Colonic mucosa (tissue), 4 donors: ENCODE measurements at regions of chr7 and their contacts with region 1.

Region 1: GRCh38 chr7:41940760-41941343 is 238.0 kb upstream of the INHBA start:
- DNase-seq: peak; percentile 69
- H3K4me3 ChIP-seq: no peak overlapping the region
- H3K27ac ChIP-seq: no peak overlapping the region
- H3K4me1 ChIP-seq: peaks cover 7% of the 10 kb centered on the region
- H3K27me3 ChIP-seq: no peaks in the 10 kb centered on the region
- CTCF ChIP-seq: peak; percentile 95

Region 2: DNA sequence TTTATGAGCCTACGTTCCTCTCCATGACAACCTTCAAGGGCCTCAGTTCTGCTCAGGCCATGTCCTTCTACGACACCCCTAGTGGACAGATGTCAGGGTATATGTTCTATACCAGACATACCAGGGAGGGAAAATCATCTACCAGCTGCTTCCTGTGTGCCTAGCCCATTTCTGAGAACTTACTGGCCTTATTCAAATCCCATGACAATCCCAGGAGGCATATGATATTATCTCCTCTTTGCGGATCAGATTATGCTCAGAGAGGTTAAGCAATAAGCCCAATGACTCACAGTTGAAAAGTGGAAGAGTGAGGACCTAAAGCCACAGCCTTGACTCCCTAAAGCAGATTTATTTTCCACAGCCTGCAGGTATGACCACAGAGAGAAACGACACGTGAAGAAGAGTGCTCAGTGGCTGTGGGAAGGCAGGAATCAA is 156.9 kb after region 1 on chr7:
- intact Hi-C with region 1: no loop called
- DNase-seq: no peak
- H3K4me3 ChIP-seq: no peak overlapping the region
- H3K27ac ChIP-seq: no peak overlapping the region
- H3K4me1 ChIP-seq: peaks cover 3% of the 10 kb centered on the region
- H3K27me3 ChIP-seq: no peaks in the 10 kb centered on the region
- CTCF ChIP-seq: no peak

Region 3: GRCh38 chr7:42690794-42691639 is 750.2 kb after region 1 on chr7:
- intact Hi-C with region 1: loop called (anchors 10 kb)
- DNase-seq: peak; percentile 27
- H3K4me3 ChIP-seq: no peak overlapping the region
- H3K27ac ChIP-seq: no peak overlapping the region
- H3K4me1 ChIP-seq: no peaks in the 10 kb centered on the region
- H3K27me3 ChIP-seq: no peaks in the 10 kb centered on the region
- CTCF ChIP-seq: no peak

Region 4: DNA sequence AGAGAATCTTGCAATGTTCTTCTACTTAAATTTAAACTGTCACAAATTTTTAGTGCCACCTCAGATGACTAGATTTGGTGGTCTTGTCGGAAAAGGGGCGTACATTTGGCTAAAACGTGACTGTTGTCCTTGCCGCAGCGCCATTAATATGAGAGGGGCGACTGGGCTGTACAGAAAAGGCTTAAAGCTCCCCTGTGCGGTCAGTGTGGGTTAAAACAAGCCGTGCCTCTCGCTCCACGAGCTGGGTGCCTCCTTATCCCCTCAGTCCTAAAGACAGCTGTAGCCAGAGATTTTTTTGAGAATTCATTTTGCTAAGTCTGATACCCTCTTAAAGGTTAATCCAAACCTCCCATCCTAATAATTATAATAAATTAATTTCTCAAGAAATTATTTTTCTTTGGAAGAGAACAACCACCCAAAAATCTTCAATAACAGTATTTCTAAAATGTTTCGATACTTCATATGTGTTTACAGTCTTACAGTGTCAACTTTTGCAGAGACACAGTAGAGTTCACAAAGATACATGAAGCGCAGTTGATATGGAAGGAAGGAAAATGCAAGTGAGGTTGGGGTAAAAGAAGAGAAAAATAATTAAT is 902.5 kb after region 1 on chr7:
- intact Hi-C with region 1: loop called (anchors 5 kb)
- DNase-seq: peak; percentile 33
- H3K4me3 ChIP-seq: no peak overlapping the region
- H3K27ac ChIP-seq: no peak overlapping the region
- H3K4me1 ChIP-seq: no peaks in the 10 kb centered on the region
- H3K27me3 ChIP-seq: no peaks in the 10 kb centered on the region
- CTCF ChIP-seq: peak; percentile 17

Region 5: GRCh38 chr7:42876182-42877068 is 935.6 kb after region 1 on chr7:
- intact Hi-C with region 1: loop called (anchors 5 kb)
- DNase-seq: peak; percentile 79
- H3K4me3 ChIP-seq: no peak overlapping the region
- H3K27ac ChIP-seq: no peak overlapping the region
- H3K4me1 ChIP-seq: no peaks in the 10 kb centered on the region
- H3K27me3 ChIP-seq: no peaks in the 10 kb centered on the region
- CTCF ChIP-seq: peak; percentile 84

Region 6: GRCh38 chr7:43249823-43250145 is 1308.9 kb after region 1 on chr7:
- intact Hi-C with region 1: loop called (anchors 10 kb)
- DNase-seq: no peak
- H3K4me3 ChIP-seq: no peak overlapping the region
- H3K27ac ChIP-seq: no peak overlapping the region
- H3K4me1 ChIP-seq: no peaks in the 10 kb centered on the region
- H3K27me3 ChIP-seq: no peaks in the 10 kb centered on the region
- CTCF ChIP-seq: no peak